ENCODE measurements at regions of chr11 and their contacts with region 1.

Region 1: GRCh38 chr11:27472398-27473016 is at the start of gene LGR4:
- DNase-seq: peak; percentile 92 to 96 (median 94)
- ATAC-seq: peak; percentile 97 to 99 (median 98)
- H3K4me3 ChIP-seq: peak within 1 kb of the TSS; percentile 55 to 99 (median 79)
- H3K27ac ChIP-seq: peak within 1 kb of the TSS; percentile 69 to 93 (median 90)
- H3K4me1 ChIP-seq: peaks cover 0 to 39% (median 20%) of the 10 kb centered on the region in 12 donors
- H3K27me3 ChIP-seq: no peaks in the 10 kb centered on the region
- CTCF ChIP-seq: no peak
- POLR2A ChIP-seq: peak in 1 of 2 donors; percentile 83
- total RNA-seq, gene LGR4: 15.5 to 39.1 (median 28.8) TPM

Region 2: GRCh38 chr11:27362749-27363575 is 109.5 kb before region 1 on chr11 and contains the start of gene CCDC34:
- intact Hi-C with region 1: loop called in 4 of 10 experiments (anchors 5 to 10 kb)
- DNase-seq: peak; percentile 90 to 96 (median 94)
- ATAC-seq: peak; percentile 99 to 100 (median 100)
- H3K4me3 ChIP-seq: peak within 1 kb of the TSS; percentile 37 to 89 (median 76)
- H3K27ac ChIP-seq: peak within 1 kb of the TSS in 8 of 12 donors; percentile 3 to 56 (median 40)
- H3K4me1 ChIP-seq: peaks cover 0 to 18% (median 10%) of the 10 kb centered on the region in 12 donors
- H3K27me3 ChIP-seq: no peaks in the 10 kb centered on the region
- CTCF ChIP-seq: no peak
- POLR2A ChIP-seq: no peak
- total RNA-seq, gene CCDC34: 1.1 to 8.3 (median 3.2) TPM

Region 3: GRCh38 chr11:27379446-27379845 is 93.1 kb before region 1 on chr11:
- intact Hi-C with region 1: loop called in 2 of 10 experiments (anchors 5 to 10 kb)
- DNase-seq: no peak
- ATAC-seq: no peak
- H3K4me3 ChIP-seq: no peak overlapping the region
- H3K27ac ChIP-seq: no peak overlapping the region
- H3K4me1 ChIP-seq: peaks cover 0 to 4% (median 0%) of the 10 kb centered on the region in 12 donors
- H3K27me3 ChIP-seq: no peaks in the 10 kb centered on the region
- CTCF ChIP-seq: no peak
- POLR2A ChIP-seq: no peak

Region 4: GRCh38 chr11:27385245-27385644 is 87.3 kb before region 1 on chr11:
- intact Hi-C with region 1: loop called in 4 of 10 experiments (anchors 5 to 10 kb)
- DNase-seq: peak in 2 of 5 donors; percentile 35 to 58
- ATAC-seq: peak in 3 of 4 donors; percentile 43 to 84 (median 72)
- H3K4me3 ChIP-seq: peak overlapping the region in 1 of 12 donors; percentile 7
- H3K27ac ChIP-seq: peak overlapping the region in 3 of 12 donors; percentile 3 to 40 (median 9)
- H3K4me1 ChIP-seq: peaks cover 0 to 20% (median 0%) of the 10 kb centered on the region in 12 donors
- H3K27me3 ChIP-seq: no peaks in the 10 kb centered on the region
- CTCF ChIP-seq: no peak
- POLR2A ChIP-seq: no peak

Region 5: DNA sequence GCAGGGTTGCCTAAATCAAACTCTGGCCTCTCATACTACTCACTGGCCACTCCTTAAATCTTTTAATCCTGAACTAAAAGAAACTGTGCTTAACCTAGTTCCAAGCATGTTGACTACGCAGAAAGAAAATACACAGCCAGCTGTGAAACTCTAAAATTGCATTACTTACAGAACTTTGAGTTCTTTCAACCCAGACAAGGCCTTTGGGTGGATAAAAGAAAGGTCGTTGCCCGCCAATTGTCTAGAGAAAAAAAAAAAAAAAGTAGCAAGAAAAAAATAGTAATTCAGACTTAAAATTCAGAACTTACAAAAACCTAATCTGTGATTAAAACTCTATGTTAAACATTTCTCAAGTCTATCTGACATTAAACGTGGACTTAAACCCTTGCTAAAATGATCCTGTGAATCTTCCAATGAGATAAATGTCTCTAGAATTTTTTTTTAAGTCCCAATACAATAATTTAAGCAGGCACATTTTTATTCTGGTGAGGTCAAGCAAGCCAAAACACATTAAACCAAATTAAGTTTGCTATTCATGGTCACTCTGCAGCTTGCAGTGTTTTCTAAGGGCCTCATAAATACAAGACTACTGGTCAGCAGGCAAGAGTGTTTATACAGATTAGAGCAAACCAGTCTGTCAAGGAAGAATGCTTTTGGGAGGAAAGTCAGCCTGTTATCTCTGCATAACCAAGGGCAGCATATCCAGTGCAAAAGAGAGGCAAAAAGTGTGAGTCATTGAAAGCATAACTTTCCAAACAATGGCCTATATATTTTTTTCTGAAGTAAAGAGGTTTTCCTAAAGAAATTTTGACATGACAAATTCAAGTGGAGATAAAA is 80.0 kb before region 1 on chr11:
- intact Hi-C with region 1: loop called in 5 of 10 experiments (anchors 5 to 10 kb)
- DNase-seq: no peak
- ATAC-seq: peak; percentile 57 to 71 (median 65)
- H3K4me3 ChIP-seq: no peak overlapping the region
- H3K27ac ChIP-seq: peak overlapping the region in 7 of 12 donors; percentile 5 to 35 (median 23)
- H3K4me1 ChIP-seq: peaks cover 0 to 58% (median 5%) of the 10 kb centered on the region in 12 donors
- H3K27me3 ChIP-seq: no peaks in the 10 kb centered on the region
- CTCF ChIP-seq: no peak
- POLR2A ChIP-seq: no peak

Region 6: GRCh38 chr11:27506200-27507182 is 34.0 kb after region 1 on chr11 and contains the start of gene LIN7C:
- intact Hi-C with region 1: loop called in 1 of 10 experiments (anchors 2 kb)
- DNase-seq: peak; percentile 96 to 97 (median 97)
- ATAC-seq: peak; percentile 97 to 99 (median 98)
- H3K4me3 ChIP-seq: peak within 1 kb of the TSS; percentile 59 to 99 (median 71)
- H3K27ac ChIP-seq: peak within 1 kb of the TSS; percentile 75 to 96 (median 92)
- H3K4me1 ChIP-seq: peaks cover 0 to 56% (median 35%) of the 10 kb centered on the region in 12 donors
- H3K27me3 ChIP-seq: no peaks in the 10 kb centered on the region
- CTCF ChIP-seq: peak in 3 of 12 donors; percentile 15 to 29 (median 28)
- POLR2A ChIP-seq: peak; percentile 41 to 91
- total RNA-seq, gene LIN7C: 13.2 to 24.1 (median 16.6) TPM

Measured in heart left ventricle (tissue), 16 donors.